HAP-1 (cell line): ENCODE measurements at regions of chr13 and their contacts with region 1.

Region 1: DNA sequence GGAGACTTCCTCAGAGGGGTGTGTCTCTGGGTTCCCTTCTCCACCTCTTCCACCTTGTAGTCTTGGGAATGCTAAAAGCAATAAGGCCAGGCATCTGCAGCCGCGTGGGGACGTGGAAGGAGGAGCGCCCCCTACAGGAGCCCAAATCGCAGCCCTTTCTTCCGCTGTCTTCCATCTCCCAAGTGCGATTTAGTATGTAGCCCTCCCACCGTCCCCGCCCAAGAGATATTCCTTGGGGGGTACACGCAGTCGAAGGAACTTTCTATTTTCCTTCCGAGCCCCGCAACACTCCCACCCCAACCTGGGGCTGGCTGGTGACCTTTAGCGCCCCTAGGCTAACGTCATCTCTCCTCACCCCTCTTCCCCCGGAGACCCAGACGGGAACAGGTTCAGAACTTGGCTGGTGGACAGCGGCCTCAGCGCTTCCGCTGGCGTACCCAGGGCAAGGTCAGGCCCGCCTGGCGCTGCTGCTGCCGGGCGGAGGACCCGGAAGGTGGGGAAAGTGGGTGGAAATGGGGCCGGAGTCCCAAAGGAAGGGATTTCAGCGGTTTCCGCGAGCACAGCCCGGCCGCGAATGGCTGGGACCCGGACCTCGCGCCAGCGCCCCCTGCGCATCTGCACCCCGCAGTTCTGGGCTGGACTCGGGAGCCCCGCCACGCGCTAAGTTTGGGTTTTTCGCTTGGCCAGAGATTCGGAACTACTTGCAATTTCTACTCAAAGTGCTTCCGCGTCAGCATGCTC is 2.1 kb upstream of the PCDH8 start:
- DNase-seq: peak; percentile 78 to 92
- H3K4me3 ChIP-seq: peak overlapping the region; percentile 47
- H3K4me1 ChIP-seq: peaks cover 15% of the 10 kb centered on the region
- H3K27me3 ChIP-seq: peaks cover 32% of the 10 kb centered on the region

Region 2: DNA sequence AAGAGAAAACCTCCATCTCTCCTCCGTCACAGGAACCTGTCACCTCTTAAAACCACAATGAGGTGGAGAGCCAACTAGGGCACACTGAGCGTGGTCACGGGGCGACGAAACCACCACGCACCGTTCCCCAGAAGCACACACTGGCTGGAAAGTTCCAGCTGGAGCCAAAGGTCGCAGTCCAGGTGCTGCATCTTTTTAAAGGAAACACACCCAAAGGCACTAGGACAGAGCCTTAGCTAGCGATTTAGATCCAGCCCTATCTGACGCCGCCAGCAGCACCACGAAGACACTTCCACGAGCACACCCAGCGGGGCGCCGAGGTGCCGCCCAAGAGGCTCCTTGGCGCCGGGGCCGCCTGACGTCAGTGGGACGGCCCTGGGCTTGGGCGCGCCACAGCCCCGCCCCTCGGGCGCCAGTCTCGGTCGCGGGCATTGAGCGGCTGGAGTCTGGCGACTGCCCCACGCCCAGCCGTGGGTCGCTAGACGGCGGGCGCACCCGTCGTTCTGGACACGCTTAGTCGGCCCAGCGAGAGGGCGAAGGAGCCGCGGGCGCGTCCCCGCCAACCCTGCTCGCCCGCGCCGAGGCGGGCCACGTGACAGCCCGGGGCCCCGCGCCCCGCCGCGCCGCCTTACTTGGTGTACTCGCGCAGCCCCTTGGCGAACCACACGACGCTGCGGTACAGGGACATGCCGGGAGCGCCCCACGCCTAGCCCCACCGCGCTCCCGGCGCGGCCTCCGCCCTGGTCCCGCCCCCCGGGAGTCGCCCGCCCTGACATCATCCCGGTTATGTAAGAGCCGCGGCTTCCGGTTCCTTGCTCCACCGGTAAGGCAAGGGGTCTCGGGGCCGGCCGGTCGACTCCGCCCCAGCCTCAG is 1046.9 kb before region 1 on chr13 and contains the start of gene DHRS12:
- in situ Hi-C with region 1: no loop called
- DNase-seq: peak; percentile 56 to 87
- H3K4me3 ChIP-seq: peak within 1 kb of the TSS; percentile 52
- H3K4me1 ChIP-seq: peaks cover 32% of the 10 kb centered on the region
- H3K27me3 ChIP-seq: no peaks in the 10 kb centered on the region

Region 3: GRCh38 chr13:52707375-52707774 is 143.2 kb before region 1 on chr13:
- in situ Hi-C with region 1: no loop called
- DNase-seq: peak; percentile 55 to 63
- H3K4me3 ChIP-seq: no peak overlapping the region
- H3K4me1 ChIP-seq: peaks cover 42% of the 10 kb centered on the region
- H3K27me3 ChIP-seq: no peaks in the 10 kb centered on the region

Region 4: GRCh38 chr13:52968074-52968700 is 117.6 kb after region 1 on chr13:
- in situ Hi-C with region 1: loop called (anchors 10 kb)
- DNase-seq: peak; percentile 71 to 84
- H3K4me3 ChIP-seq: no peak overlapping the region
- H3K4me1 ChIP-seq: no peaks in the 10 kb centered on the region
- H3K27me3 ChIP-seq: peaks cover 30% of the 10 kb centered on the region

Region 5: DNA sequence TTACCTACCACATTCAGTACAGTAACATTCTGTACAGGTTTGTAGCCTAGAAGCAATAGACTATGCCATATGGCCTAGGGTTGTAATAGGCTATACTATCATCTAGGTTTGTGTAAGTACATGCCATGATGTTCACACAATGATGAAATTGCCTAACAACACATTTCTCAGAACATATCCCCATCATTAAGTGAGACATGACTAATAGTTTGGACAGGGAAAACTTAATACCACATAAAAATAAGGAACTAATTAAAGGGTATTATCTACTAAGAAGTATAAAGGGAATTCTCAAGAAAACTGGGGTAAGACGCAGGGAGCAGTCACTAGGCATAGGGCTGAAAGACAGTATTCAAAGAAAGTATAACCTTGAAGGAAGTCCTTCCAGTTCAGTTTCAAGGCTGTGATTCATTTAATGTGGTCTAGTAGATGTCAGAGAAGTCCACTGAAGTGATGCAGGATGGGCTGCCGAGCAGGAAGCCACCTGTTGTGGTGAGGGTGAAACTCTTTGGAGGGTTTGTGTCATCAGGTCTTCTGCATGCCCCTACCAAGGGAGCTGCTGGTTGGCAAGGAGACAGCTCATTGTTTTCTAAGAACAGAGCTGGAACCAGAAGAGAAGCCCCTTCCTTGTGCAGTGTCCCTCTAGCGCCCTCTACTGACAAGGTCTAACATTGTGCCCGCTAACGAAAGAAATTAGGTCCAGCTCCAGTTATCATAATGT is 300.9 kb after region 1 on chr13:
- in situ Hi-C with region 1: loop called (anchors 25 kb)
- DNase-seq: peak; percentile 66 to 76
- H3K4me3 ChIP-seq: no peak overlapping the region
- H3K4me1 ChIP-seq: no peaks in the 10 kb centered on the region
- H3K27me3 ChIP-seq: peaks cover 39% of the 10 kb centered on the region